BJ (cell line): ENCODE measurements at regions of chr19 and their contacts with region 1.

Region 1: DNA sequence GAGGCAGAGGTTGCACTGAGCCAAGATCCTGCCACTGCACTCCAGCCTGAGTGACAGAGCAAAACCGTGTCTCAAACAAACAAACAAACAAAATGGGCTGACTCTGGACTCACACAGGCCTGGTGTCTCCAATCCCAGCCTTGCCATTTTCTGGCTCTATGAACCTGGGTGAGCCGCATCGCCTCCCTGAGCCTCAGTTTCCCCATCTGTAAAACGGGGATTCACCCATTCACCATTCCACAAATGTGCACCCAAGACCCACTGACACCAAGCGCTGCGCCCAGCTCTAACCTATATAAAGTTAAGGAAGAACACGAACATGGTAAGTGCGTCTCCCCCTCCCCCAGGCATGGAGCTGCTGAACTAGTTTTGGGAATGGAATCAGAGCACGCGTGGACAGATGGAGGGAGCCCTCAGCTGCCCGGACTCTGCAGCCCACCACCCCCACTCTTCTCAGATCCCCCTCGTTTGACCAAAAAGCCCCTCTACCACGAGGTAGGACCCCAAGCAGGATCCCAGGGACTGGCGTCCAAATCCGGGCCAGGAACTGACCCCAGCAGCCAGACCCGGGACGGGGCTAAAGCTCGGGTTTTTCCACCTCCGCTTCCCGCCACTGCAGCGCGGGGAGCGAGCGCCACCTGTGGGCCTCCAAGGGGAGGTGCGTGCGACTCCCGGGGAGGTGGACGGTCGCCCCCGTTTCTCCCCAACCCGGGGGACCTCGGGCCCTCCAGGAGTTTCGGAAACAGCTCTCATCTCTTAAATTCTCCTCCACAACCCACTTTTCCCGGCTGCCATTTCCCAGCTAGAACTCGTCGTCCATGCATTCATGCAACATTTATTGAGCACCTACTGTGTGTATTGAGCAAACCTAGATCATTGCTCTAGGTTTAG is 33.0 kb upstream of the ADGRE5 start:
- DNase-seq: no peak
- H3K4me3 ChIP-seq: peak overlapping the region; percentile 32
- H3K27me3 ChIP-seq: peaks cover 8% of the 10 kb centered on the region
- CTCF ChIP-seq: peak; percentile 100

Region 2: DNA sequence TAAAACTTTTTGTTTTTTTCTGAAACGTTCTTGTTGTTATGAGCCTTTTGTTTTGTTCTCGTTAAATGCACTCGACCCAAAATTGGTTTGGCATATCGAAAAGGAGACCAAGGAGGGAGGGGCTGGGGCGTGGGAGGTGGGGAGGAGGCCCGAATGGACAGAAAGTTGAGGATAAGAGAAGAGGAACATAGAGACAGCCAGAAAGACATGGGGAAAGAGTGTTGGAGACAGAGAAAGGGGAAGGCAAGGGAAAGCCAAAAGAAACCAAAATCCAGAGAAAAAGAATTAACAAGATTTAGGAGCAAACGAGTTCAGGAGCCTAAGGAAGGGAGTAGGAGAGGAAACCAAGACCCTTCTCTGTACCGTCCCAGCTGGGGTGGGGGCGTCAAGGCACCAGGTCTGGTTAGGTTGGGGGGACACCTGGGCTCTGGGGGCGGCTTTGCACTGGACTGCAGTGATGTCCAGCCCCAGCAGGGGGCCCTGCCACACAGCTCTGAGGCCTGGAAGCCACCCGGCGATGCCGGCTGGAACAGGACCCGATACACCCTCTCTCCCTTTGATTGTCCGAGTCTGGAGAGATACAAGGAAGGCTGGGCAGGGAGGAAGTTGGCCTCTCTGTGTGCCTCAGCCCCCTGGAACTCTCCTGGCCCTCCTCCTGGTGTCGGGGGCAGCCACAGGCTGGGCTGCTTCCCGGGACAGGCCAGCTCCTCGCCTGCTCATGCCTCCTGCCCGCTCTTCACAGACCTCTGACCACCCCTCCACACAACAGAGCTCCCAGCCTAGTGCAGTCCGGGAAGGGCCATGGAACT is 200.2 kb before region 1 on chr19:
- CTCF ChIA-PET with region 1: interaction called, 18 read pairs
- POLR2A ChIA-PET with region 1: no interaction called
- DNase-seq: no peak
- H3K4me3 ChIP-seq: no peak overlapping the region
- H3K27me3 ChIP-seq: no peaks in the 10 kb centered on the region
- CTCF ChIP-seq: peak; percentile 95

Region 3: GRCh38 chr19:14198384-14199376 is 149.6 kb before region 1 on chr19:
- CTCF ChIA-PET with region 1: interaction called, 46 read pairs
- POLR2A ChIA-PET with region 1: no interaction called
- DNase-seq: no peak
- H3K4me3 ChIP-seq: no peak overlapping the region
- H3K27me3 ChIP-seq: 0 out of 2 replicates have a peak, but pooled peaks cover 2% of the 10 kb centered on the region
- CTCF ChIP-seq: peak; percentile 23; the same call in 1 of the 2 replicates

Region 4: DNA sequence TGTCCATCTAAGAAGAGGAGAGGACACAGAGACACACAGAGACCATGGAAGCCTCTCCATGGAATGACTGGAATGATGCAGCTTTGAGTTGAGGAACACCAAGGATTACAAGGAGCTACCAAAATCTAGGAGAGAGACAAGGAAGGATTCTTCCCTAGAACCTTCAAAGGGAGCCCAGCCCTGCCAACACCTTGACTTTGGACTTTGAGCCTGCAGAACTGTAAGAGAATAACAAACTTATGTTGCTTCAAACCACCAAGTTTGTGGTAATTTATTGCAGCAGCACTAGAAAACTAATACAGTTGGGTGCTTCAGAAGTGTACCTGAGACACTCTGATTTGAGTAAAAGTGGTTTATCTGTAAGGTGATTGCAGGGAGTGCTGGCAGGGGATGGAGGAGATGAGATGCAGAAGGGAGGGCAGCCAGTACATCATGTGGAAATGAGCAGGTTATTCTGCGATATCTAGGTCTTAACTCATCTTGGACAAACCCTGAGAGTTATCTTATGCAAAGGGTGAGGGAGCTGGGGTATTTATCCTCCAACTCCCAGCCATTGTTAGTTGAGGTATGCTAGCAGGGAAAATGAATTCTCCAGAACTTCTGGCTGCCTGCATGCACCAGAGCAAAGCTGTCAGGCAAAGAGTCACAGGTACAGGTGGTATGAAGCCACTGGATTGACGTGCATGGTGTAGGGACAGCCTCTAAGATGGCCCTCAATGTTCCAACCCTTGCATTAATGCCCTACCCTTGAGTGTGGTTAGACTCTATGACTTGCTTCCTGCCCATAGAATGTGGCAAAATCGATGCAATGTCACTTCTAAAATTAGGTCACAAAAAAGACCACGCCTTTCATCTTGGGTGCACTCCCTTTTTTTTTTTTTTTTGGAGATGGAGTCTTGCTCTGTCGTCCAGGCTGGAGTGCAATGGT is 111.0 kb before region 1 on chr19:
- CTCF ChIA-PET with region 1: no interaction called
- POLR2A ChIA-PET with region 1: interaction called, 10 read pairs
- DNase-seq: no peak
- H3K4me3 ChIP-seq: no peak overlapping the region
- H3K27me3 ChIP-seq: no peaks in the 10 kb centered on the region
- CTCF ChIP-seq: no peak

Region 5: DNA sequence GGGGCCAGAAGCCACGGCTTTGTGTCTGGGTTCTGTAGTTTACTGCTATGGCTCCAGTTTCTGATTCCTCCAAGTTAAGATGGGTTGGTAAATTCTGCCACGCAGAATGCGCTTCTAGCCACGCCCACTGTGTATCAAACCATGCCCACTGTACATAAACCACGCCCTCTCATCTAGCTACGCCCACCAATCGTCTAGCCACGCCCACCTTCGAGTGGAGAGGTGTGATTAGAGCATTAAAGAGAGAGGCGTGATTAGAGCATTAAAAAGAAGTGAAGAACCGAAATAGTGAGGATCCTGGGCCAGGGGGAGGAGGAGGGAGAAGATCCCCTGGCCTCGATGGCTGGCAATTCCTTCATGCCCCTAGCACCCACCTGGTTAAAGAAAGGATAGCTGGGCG is 10.7 kb before region 1 on chr19:
- CTCF ChIA-PET with region 1: interaction called, 22 read pairs
- POLR2A ChIA-PET with region 1: no interaction called
- DNase-seq: no peak
- H3K4me3 ChIP-seq: no peak overlapping the region
- H3K27me3 ChIP-seq: no peaks in the 10 kb centered on the region
- CTCF ChIP-seq: no peak

Region 6: GRCh38 chr19:14383661-14384555 is 35.7 kb after region 1 on chr19:
- CTCF ChIA-PET with region 1: interaction called, 10 read pairs
- POLR2A ChIA-PET with region 1: no interaction called
- DNase-seq: no peak
- H3K4me3 ChIP-seq: peak overlapping the region; percentile 12
- H3K27me3 ChIP-seq: no peaks in the 10 kb centered on the region
- CTCF ChIP-seq: peak; percentile 21; the same call in 1 of the 2 replicates

Region 7: DNA sequence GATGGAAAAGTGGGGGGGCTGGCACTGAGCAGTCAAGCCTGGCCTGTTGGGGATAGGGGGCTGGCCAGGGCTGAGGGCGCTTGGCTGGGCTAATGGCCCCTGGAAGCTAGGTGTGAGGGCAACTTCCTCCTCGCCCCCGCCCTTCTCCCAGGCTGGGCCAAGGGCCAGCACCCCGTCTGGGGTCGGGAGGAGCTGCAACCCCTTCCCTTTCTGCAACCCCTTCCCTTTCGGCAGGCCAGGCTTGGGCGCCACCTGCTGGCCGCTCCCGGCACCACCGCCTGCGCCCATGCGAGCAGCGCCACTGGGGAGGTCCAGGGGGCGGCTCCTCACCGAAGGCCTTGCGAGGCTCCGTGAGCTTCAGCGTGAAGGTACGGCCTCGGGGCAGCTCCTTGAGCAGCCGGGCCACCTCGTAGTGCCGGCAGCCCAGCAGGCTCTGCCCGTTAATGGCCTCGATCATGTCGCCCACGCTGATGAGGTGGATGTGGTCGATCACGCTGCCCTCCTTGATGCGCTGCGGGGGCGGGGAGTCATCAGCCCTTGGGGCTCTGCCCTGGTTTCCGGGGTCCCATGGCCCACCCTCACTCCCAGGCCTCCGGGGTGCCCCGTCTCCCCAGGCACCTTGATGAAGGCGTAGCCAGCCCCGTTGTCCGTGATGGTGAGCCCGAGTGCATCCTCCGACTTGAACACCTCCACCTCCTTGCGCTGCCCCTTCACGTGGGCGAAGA is 131.9 kb after region 1 on chr19:
- CTCF ChIA-PET with region 1: no interaction called
- POLR2A ChIA-PET with region 1: no interaction called
- DNase-seq: no peak
- H3K4me3 ChIP-seq: no peak overlapping the region
- H3K27me3 ChIP-seq: no peaks in the 10 kb centered on the region
- CTCF ChIP-seq: peak; percentile 82